Activated CD8-positive, alpha-beta T cell treated with anti-CD3 and anti-CD28 coated beads for 36 hours (primary cell): ENCODE measurements at regions of chr22 and their contacts with region 1.

Region 1: GRCh38 chr22:40326905-40327735 is 19.2 kb upstream of the ADSL start:
- DNase-seq: peak; percentile 29
- ATAC-seq: peak; percentile 9
- H3K4me3 Mint-ChIP-seq: peak overlapping the region; percentile 22
- H3K27ac Mint-ChIP-seq: peak overlapping the region; percentile 87
- H3K4me1 Mint-ChIP-seq: peaks cover 93% of the 10 kb centered on the region
- H3K27me3 Mint-ChIP-seq: no peaks in the 10 kb centered on the region
- CTCF ChIP-seq: no peak

Region 2: DNA sequence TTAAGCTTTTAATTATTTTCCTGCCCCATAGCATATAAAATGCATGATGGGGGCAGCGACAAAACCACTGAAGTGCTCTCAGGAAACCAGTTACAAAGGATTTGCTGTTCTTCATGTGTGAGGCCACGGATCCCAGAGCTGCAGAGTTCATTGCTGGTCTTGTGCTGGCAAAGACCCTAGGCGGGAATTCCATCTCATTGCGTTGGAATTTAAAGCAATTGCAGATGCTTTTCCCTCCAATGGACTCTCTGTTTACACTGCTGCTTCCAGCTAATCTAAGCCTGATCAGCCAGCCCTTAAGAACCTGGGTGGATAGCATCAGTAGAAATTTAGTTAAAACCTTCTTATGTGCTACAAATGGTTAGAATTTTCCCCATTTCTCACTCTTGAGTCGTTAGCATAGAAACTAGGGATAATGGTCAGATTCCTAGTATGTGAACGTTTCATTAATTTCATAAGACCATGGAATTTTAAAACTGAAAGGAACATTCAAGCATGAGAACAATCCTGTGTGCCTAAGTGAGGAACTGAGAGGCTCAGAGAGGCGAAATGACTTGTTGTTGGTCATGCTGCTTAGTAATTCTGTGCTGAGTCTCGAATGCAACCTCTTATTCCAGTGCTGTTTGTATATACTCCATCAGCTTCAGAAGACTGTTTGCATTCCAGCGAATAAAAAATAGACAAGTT is 16.9 kb before region 1 on chr22:
- CTCF ChIA-PET with region 1: interaction called, 4 read pairs
- POLR2A ChIA-PET with region 1: interaction called, 12 read pairs
- intact Hi-C with region 1: no loop called
- DNase-seq: no peak
- ATAC-seq: no peak
- H3K4me3 Mint-ChIP-seq: no peak overlapping the region
- H3K27ac Mint-ChIP-seq: no peak overlapping the region
- H3K4me1 Mint-ChIP-seq: peaks cover 36% of the 10 kb centered on the region
- H3K27me3 Mint-ChIP-seq: no peaks in the 10 kb centered on the region
- CTCF ChIP-seq: no peak